CD8-positive, alpha-beta memory T cell (primary cell): ENCODE measurements at regions of chr20 and their contacts with region 1.

Region 1: GRCh38 chr20:50153485-50154377 is at the start of gene PEDS1:
- DNase-seq: peak; percentile 77 to 86 (median 82)
- H3K4me3 ChIP-seq: peak within 1 kb of the TSS; percentile 91
- H3K4me3 Mint-ChIP-seq: peak within 1 kb of the TSS; percentile 83 to 94 (median 86)
- H3K27ac ChIP-seq: peak within 1 kb of the TSS; percentile 89
- H3K27ac Mint-ChIP-seq: peak within 1 kb of the TSS; percentile 81 to 97 (median 93)
- H3K4me1 ChIP-seq: peaks cover 26% of the 10 kb centered on the region
- H3K4me1 Mint-ChIP-seq: peaks cover 41 to 52% (median 50%) of the 10 kb centered on the region in 3 donors
- H3K27me3 ChIP-seq: no peaks in the 10 kb centered on the region
- H3K27me3 Mint-ChIP-seq: no peaks in the 10 kb centered on the region
- total RNA-seq, gene PEDS1: 20.2 to 23.6 TPM

Region 2: GRCh38 chr20:50115591-50116372 is 37.9 kb before region 1 on chr20:
- CTCF ChIA-PET with region 1: interaction called, 70 read pairs
- POLR2A ChIA-PET with region 1: interaction called, 11 read pairs
- DNase-seq: peak; percentile 84 to 92 (median 86)
- H3K4me3 ChIP-seq: peak overlapping the region; percentile 82
- H3K4me3 Mint-ChIP-seq: peak overlapping the region; percentile 77 to 93 (median 84)
- H3K27ac ChIP-seq: peak overlapping the region; percentile 49
- H3K27ac Mint-ChIP-seq: peak overlapping the region; percentile 71 to 97 (median 94)
- H3K4me1 ChIP-seq: peaks cover 44% of the 10 kb centered on the region
- H3K4me1 Mint-ChIP-seq: peaks cover 46 to 57% (median 50%) of the 10 kb centered on the region in 3 donors
- H3K27me3 ChIP-seq: no peaks in the 10 kb centered on the region
- H3K27me3 Mint-ChIP-seq: no peaks in the 10 kb centered on the region

Region 3: GRCh38 chr20:50446351-50447101 is 292.8 kb after region 1 on chr20:
- CTCF ChIA-PET with region 1: no interaction called
- POLR2A ChIA-PET with region 1: no interaction called
- DNase-seq: no peak
- H3K4me3 ChIP-seq: no peak overlapping the region
- H3K4me3 Mint-ChIP-seq: no peak overlapping the region
- H3K27ac ChIP-seq: no peak overlapping the region
- H3K27ac Mint-ChIP-seq: no peak overlapping the region
- H3K4me1 ChIP-seq: peaks cover 10% of the 10 kb centered on the region
- H3K4me1 Mint-ChIP-seq: peaks cover 9 to 13% (median 10%) of the 10 kb centered on the region in 3 donors
- H3K27me3 ChIP-seq: peaks cover 5% of the 10 kb centered on the region
- H3K27me3 Mint-ChIP-seq: peaks cover 18 to 39% of the 10 kb centered on the region in 2 donors